Left colon (tissue), 2 donors: ENCODE measurements at regions of chr17 and their contacts with region 1.

Region 1: GRCh38 chr17:36127199-36127893 is 23.7 kb downstream of the CCL4 start:
- DNase-seq: no peak
- ATAC-seq: no peak

Region 2: DNA sequence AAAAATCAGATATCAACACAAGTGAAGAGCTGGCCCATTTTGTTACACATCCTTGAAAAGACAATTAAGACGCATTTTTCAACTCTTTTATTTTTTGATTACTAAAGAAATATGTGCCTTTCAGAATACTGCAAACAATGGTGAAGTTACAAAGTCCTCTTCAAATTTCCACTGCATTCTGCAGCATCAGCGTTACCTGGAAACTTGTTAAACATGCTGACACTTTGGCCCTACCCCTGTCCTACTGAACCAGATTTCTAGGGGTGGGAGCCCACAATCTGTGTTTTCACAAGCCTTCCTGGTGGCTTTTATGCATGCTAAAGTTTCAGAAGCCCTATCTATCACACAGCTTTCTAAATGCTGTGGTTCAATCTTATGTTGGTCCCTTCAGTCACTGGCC is 136.3 kb before region 1 on chr17:
- intact Hi-C with region 1: no loop called
- DNase-seq: no peak
- ATAC-seq: peak; percentile 58

Region 3: DNA sequence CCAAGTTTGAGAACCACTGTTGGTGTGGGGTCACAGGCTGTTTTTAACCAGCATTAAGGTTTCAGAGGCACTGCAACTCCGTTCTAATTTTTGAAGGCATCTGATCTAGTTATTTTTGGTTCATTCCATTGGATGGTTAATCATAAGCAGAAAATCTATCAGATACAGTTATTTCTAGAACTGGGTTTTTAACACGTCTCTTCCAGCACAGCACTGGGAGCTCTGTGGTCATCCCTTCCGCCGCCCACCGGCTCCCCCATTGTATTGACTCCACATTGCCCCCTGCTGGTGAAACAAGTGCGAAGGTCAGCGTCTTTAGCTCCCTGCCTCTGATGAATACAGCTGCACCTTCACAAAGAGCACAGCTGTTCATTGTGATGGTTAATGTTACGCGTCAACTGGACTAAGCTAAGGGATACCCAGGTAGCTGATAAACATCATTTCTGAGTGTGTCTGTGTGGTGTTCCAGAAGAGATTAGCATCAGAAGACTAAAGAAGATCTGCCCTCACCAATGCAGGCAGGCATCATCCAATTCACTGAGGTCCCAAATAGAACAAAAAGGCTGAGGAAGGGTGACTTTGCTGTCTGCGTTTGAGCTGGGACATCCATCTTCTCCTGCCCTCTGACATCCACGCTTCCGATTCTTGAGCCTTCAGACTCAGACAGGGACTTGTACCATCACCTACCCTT is 54.8 kb before region 1 on chr17:
- intact Hi-C with region 1: no loop called
- DNase-seq: peak in 1 of 2 donors; percentile 68
- ATAC-seq: peak; percentile 63

Region 4: DNA sequence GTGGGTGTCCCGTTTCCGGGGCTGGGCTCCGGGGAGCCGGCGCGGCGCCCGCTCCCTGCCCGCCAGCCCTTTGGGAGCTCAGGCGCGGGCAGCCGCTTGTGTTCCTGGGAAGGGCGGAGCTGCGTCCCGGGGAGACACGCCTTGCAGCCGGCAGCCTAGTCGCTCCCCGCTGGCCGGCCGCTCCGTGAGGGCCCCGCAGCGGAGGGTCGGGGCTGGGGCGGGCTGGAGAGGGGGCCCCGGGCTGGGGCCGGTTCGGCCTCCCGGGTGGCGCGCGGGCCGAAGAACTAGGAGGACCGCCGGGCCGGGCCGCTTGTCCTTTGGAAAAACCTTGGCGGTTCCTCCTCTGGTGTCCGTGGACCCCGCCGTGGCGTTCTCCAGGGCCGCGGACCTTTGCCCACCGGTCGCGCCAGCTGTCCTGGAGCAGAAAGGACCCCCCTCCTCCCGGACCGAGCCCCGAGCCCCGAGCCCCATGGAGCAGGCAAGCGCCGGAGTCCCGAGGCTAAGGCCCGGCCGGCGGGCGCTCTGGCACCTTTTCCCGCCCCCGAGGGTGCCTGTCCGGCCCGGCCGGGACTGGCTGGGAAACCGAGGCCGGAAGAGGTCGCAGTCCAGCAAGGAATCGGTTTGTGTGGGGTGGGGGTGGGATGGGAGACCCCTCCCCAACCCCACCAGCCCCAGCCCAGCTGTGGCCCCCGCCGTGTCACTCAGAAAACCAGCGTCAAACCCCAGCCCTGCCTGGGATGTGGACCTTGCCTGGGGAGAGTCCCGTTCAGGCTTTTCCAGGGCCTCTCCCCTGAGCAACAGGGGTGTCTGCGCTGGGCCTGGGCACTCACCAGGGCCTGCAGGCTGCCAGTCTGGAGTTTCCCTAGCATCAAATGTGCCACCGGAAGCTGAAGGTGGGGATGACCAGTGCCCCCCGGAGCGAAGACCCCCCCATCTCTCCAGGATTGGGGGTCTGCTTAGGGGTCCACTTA is 55.9 kb after region 1 on chr17:
- intact Hi-C with region 1: loop called in 1 of 2 experiments (anchors 5 kb)
- DNase-seq: peak; percentile 77 to 82
- ATAC-seq: peak; percentile 91